ENCODE measurements at regions of chr5 and their contacts with region 1.

Region 1: GRCh38 chr5:100790170-100790665 is 112.9 kb downstream of the ST8SIA4 start:
- DNase-seq: peak; percentile 74
- H3K4me3 ChIP-seq: peak overlapping the region; percentile 35
- H3K27ac ChIP-seq: peak overlapping the region; percentile 58
- H3K4me1 ChIP-seq: peaks cover 49% of the 10 kb centered on the region
- CTCF ChIP-seq: peak; percentile 80

Region 2: DNA sequence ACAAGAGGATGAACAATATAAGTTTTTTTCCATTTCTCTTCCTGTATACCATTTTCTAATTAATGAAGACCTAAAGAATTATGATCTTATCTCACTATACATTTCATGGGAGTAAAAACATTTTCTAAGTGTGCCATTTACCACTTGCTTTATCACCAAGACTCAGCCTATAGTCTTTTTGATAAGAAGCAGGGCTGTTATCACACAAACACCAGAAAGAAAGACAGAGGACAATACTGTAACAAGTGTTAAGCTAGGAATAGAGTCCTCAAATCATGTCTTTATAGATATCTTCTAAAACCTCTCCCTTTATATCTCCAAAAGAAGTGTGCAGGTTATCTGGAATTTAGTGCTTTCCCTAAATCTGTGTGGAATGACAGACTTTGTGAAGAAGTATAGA is 135.3 kb before region 1 on chr5:
- CTCF ChIA-PET with region 1: no interaction called
- POLR2A ChIA-PET with region 1: no interaction called
- intact Hi-C with region 1: no loop called
- DNase-seq: no peak
- H3K4me3 ChIP-seq: no peak overlapping the region
- H3K27ac ChIP-seq: no peak overlapping the region
- H3K4me1 ChIP-seq: no peaks in the 10 kb centered on the region
- CTCF ChIP-seq: no peak

Region 3: GRCh38 chr5:100803397-100803796 is 13.2 kb after region 1 on chr5:
- CTCF ChIA-PET with region 1: no interaction called
- POLR2A ChIA-PET with region 1: interaction called, 19 read pairs
- intact Hi-C with region 1: no loop called
- DNase-seq: no peak
- H3K4me3 ChIP-seq: no peak overlapping the region
- H3K27ac ChIP-seq: no peak overlapping the region
- H3K4me1 ChIP-seq: peaks cover 4% of the 10 kb centered on the region
- CTCF ChIP-seq: no peak

Region 4: DNA sequence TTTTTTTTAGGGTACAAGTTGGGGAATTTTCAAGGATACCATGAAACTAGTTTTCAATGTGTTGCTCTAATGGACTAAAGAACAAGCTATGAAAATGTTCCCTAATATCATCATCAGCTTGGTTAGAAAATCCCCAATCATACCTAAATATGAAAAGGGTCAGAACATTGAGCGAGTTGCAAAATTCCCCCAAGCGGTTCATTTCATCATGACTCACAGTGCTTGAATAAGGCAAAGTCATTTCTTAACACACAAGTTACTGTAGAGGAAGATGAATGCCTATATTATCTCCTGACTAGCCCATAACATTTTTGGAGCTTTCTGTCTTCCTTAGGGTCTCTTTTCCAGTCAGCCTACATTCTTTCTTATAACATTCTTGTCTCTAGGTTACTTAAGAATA is 50.2 kb after region 1 on chr5:
- CTCF ChIA-PET with region 1: no interaction called
- POLR2A ChIA-PET with region 1: interaction called, 12 read pairs
- intact Hi-C with region 1: no loop called
- DNase-seq: peak; percentile 40
- H3K4me3 ChIP-seq: peak overlapping the region; percentile 53
- H3K27ac ChIP-seq: peak overlapping the region; percentile 45
- H3K4me1 ChIP-seq: peaks cover 34% of the 10 kb centered on the region
- CTCF ChIP-seq: no peak

Region 5: GRCh38 chr5:100852988-100853449 is 62.8 kb after region 1 on chr5:
- CTCF ChIA-PET with region 1: interaction called, 3 read pairs
- POLR2A ChIA-PET with region 1: interaction called, 24 read pairs
- intact Hi-C with region 1: loop called (anchors 2 kb)
- DNase-seq: peak; percentile 91
- H3K4me3 ChIP-seq: peak overlapping the region; percentile 54
- H3K27ac ChIP-seq: peak overlapping the region; percentile 98
- H3K4me1 ChIP-seq: peaks cover 75% of the 10 kb centered on the region
- CTCF ChIP-seq: no peak

Measured in OCI-LY7 (cell line).